T-cell (primary cell): ENCODE measurements at regions of chr19 and their contacts with region 1.

Region 1: DNA sequence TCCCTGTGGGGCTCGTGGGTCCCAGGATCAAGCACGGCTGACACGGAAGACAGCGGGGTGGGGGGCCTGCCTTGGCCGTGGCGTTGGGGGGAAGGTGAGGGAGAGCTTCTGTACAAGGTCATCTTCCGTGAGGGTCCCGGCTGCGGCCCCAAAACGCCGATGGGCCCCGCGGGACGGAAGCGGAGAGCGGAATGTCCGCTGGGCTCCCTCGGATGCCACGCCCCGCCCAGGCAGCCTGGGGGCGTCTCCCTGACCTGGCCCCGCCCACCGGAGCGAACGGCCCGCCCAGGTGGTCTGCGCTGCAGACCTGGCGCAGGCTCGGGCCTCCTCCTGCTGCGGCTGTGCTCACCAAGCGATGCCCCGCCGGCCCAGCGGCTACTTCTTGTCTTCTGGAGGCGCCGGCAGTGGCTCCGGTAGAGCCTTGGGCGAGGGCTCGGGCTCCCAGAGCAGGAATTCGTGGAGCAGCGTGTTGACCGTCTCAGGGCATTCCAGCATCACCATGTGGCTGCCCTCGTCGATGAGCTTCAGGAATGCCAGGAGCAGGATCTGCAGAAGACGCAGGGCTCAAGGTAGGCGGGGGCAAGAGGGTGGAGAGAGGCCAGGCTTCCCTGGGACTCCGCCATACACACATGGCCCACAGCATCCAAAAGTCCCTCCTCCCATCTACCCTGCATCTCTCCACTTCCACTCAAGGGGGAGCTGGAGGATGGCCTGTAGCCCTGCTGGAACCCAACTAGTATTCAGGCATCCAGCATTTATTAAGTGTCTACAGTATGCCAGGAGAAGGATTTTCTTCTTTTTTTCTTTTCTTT is 10.7 kb downstream of the ABHD8 start:
- DNase-seq: peak; percentile 55 to 87 (median 69)
- ATAC-seq: peak; percentile 94 to 97 (median 96)
- H3K4me3 ChIP-seq: peak overlapping the region; percentile 69 to 72
- H3K4me3 Mint-ChIP-seq: peak overlapping the region; percentile 82 to 92 (median 89)
- H3K27ac ChIP-seq: no peak overlapping the region
- H3K27ac Mint-ChIP-seq: peak overlapping the region; percentile 43 to 75
- H3K4me1 ChIP-seq: peaks cover 0 to 16% of the 10 kb centered on the region in 2 experiments
- H3K4me1 Mint-ChIP-seq: peaks cover 5 to 8% (median 8%) of the 10 kb centered on the region in 3 donors
- H3K27me3 ChIP-seq: peaks cover 0 to 15% of the 10 kb centered on the region in 2 experiments
- H3K27me3 Mint-ChIP-seq: peaks cover 0 to 6% of the 10 kb centered on the region in 2 donors

Region 2: DNA sequence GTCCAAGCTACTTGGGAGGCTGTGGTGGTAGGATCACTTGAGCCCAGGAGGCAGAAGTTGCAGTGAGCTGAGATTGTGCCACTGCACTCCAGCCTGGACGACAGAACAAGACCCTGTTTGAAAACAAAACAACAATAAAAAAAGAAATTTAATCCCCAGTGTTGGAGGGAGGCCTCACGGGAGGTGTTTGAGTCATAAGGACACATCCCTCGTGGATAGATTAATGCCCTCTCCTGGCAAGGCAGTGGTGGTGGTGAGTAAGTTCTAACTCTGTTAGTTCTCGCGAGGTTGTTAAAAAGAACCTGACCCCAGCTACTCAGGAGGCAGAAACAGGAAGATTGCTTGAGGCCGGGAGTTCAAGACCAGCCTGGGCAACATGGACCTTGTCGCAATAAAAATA is 490.9 kb before region 1 on chr19:
- CTCF ChIA-PET with region 1: no interaction called
- POLR2A ChIA-PET with region 1: no interaction called
- DNase-seq: no peak
- ATAC-seq: no peak
- H3K4me3 ChIP-seq: no peak overlapping the region
- H3K4me3 Mint-ChIP-seq: no peak overlapping the region
- H3K27ac ChIP-seq: no peak overlapping the region
- H3K27ac Mint-ChIP-seq: no peak overlapping the region
- H3K4me1 ChIP-seq: no peaks in the 10 kb centered on the region
- H3K4me1 Mint-ChIP-seq: no peaks in the 10 kb centered on the region
- H3K27me3 ChIP-seq: peaks cover 0 to 5% of the 10 kb centered on the region in 2 experiments
- H3K27me3 Mint-ChIP-seq: no peaks in the 10 kb centered on the region

Region 3: DNA sequence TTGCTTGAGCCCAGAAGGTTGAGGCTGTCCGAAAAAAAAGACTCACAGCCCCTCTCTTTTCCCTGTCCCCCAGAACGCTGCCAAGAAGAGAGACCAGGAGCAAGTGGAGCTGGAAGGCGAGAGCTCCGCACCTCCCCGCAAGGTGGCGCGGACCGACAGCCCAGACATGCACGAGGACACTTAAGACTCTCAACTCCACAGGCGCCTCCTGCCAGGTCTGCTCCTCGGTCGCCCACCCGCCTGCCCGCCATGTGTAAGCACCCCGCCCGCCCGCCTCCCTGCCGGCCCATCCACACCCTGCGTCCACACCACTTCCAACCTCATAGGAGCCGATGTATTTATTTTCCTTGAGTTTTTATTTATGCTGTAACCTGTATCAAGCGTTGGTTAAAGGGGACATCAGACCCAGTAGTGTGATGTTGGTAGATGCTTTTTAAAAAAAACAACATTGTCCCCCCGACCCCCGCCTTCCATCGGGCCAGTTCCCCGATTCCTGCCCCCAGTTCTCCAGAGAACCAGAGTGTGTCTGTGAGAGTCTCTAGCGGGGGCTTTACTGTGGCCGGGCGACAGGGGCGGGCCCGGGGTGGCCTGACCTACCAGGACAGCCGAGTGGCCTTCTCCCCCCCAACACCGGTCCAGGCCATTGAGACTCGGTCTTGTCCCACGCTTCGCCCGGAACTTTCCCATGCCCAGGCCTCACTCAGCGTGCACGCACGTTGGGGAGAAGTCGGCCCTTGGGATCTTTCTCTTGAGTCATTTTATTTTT is 27.2 kb after region 1 on chr19:
- CTCF ChIA-PET with region 1: no interaction called
- POLR2A ChIA-PET with region 1: no interaction called
- DNase-seq: no peak
- ATAC-seq: no peak
- H3K4me3 ChIP-seq: no peak overlapping the region
- H3K4me3 Mint-ChIP-seq: no peak overlapping the region
- H3K27ac ChIP-seq: no peak overlapping the region
- H3K27ac Mint-ChIP-seq: no peak overlapping the region
- H3K4me1 ChIP-seq: peaks cover 0 to 19% of the 10 kb centered on the region in 2 experiments
- H3K4me1 Mint-ChIP-seq: peaks cover 4 to 12% (median 7%) of the 10 kb centered on the region in 3 donors
- H3K27me3 ChIP-seq: no peaks in the 10 kb centered on the region
- H3K27me3 Mint-ChIP-seq: no peaks in the 10 kb centered on the region

Region 4: GRCh38 chr19:17348700-17349099 is 56.2 kb after region 1 on chr19:
- CTCF ChIA-PET with region 1: no interaction called
- POLR2A ChIA-PET with region 1: no interaction called
- DNase-seq: no peak
- ATAC-seq: no peak
- H3K4me3 ChIP-seq: no peak overlapping the region
- H3K4me3 Mint-ChIP-seq: no peak overlapping the region
- H3K27ac ChIP-seq: no peak overlapping the region
- H3K27ac Mint-ChIP-seq: no peak overlapping the region
- H3K4me1 ChIP-seq: peaks cover 0 to 12% of the 10 kb centered on the region in 2 experiments
- H3K4me1 Mint-ChIP-seq: peaks cover 9 to 15% (median 10%) of the 10 kb centered on the region in 3 donors
- H3K27me3 ChIP-seq: peaks cover 2 to 61% of the 10 kb centered on the region in 2 experiments
- H3K27me3 Mint-ChIP-seq: peaks cover 26 to 27% of the 10 kb centered on the region in 2 donors

Region 5: GRCh38 chr19:17419621-17420466 is 127.4 kb after region 1 on chr19 and contains the start of gene MVB12A:
- CTCF ChIA-PET with region 1: no interaction called
- POLR2A ChIA-PET with region 1: no interaction called
- DNase-seq: peak; percentile 85 to 99 (median 96)
- ATAC-seq: peak; percentile 96 to 98 (median 96)
- H3K4me3 ChIP-seq: peak within 1 kb of the TSS; percentile 80 to 82
- H3K4me3 Mint-ChIP-seq: peak within 1 kb of the TSS; percentile 87 to 93 (median 90)
- H3K27ac ChIP-seq: peak within 1 kb of the TSS; percentile 18
- H3K27ac Mint-ChIP-seq: peak within 1 kb of the TSS; percentile 91 to 92
- H3K4me1 ChIP-seq: peaks cover 7 to 22% of the 10 kb centered on the region in 2 experiments
- H3K4me1 Mint-ChIP-seq: peaks cover 16 to 20% (median 18%) of the 10 kb centered on the region in 3 donors
- H3K27me3 ChIP-seq: no peaks in the 10 kb centered on the region
- H3K27me3 Mint-ChIP-seq: no peaks in the 10 kb centered on the region
- total RNA-seq, gene MVB12A: 21.0 to 41.4 (median 35.3) TPM

Region 6: DNA sequence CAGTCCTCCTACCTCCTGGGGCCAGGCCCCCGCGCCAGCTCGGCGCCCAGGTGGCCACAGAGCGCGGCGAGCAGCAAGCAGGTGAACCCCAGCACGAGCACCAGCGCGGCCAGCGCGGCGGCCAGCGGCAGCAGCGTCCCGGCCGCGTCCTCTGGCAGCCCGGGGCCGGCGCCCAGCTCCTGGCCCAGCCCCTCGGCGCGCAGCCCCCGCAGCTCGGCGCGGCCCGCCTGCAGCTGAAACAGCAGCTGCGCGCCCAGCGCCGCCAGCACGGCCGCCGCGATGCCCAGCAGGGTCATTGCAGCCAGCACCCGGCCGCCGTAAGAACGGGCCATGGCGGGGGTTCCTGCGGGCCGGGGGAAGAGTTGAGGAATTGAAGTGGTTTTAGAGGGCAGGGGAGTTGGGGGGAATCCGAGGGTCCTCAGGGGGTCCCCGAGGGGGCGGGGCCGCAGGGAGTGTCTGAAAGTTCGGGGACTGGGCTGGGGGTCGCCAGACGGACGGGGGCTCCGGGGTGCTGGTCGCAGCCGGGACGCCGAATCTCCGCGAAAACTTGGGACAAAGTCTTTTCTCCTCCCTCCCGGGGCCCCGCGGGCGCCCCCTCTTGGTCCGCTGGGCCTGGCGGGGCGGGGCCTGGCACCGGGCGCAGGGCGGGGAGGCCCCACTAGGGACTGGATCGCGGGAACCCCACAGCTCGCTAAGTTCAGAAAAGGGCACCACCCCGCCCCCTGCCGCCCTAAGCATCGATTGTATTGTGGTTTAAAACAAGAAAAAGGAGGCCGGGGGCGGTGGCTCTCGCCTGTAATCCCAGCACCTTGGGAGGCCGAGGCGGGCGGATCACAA is 155.9 kb after region 1 on chr19 and contains the start of gene TMEM221:
- CTCF ChIA-PET with region 1: interaction called in 1 of 2 experiments, 13 read pairs
- POLR2A ChIA-PET with region 1: no interaction called
- DNase-seq: peak; percentile 15 to 71 (median 45)
- ATAC-seq: peak; percentile 78 to 90 (median 81)
- H3K4me3 ChIP-seq: peak within 1 kb of the TSS; percentile 15 to 27
- H3K4me3 Mint-ChIP-seq: peak within 1 kb of the TSS; percentile 42 to 62 (median 54)
- H3K27ac ChIP-seq: no peak within 1 kb of the TSS
- H3K27ac Mint-ChIP-seq: no peak within 1 kb of the TSS
- H3K4me1 ChIP-seq: peaks cover 0 to 16% of the 10 kb centered on the region in 2 experiments
- H3K4me1 Mint-ChIP-seq: peaks cover 10 to 23% (median 15%) of the 10 kb centered on the region in 3 donors
- H3K27me3 ChIP-seq: peaks cover 4 to 38% of the 10 kb centered on the region in 2 experiments
- H3K27me3 Mint-ChIP-seq: peaks cover 5 to 15% of the 10 kb centered on the region in 2 donors
- total RNA-seq, gene TMEM221: not detected